ENCODE measurements at regions of chr3 and their contacts with region 1.

Region 1: GRCh38 chr3:184185461-184186308 is at the start of gene ABCF3:
- DNase-seq: peak; percentile 100
- ATAC-seq: peak; percentile 95
- H3K4me3 Mint-ChIP-seq: peak within 1 kb of the TSS; percentile 99
- H3K27ac Mint-ChIP-seq: peak within 1 kb of the TSS; percentile 93
- H3K4me1 Mint-ChIP-seq: peaks cover 32% of the 10 kb centered on the region
- H3K27me3 Mint-ChIP-seq: no peaks in the 10 kb centered on the region
- total RNA-seq, gene ABCF3: 58.2 to 66.2 TPM

Region 2: GRCh38 chr3:183635431-183636220 is 550.1 kb before region 1 on chr3 and contains the start of gene KLHL24:
- CTCF ChIA-PET with region 1: no interaction called
- POLR2A ChIA-PET with region 1: no interaction called
- intact Hi-C with region 1: loop called in 1 of 2 experiments (anchors 1 kb)
- DNase-seq: peak; percentile 95
- ATAC-seq: peak; percentile 85
- H3K4me3 Mint-ChIP-seq: peak within 1 kb of the TSS; percentile 87
- H3K27ac Mint-ChIP-seq: peak within 1 kb of the TSS; percentile 92
- H3K4me1 Mint-ChIP-seq: peaks cover 36% of the 10 kb centered on the region
- H3K27me3 Mint-ChIP-seq: no peaks in the 10 kb centered on the region
- total RNA-seq, gene KLHL24: 9.6 to 15.8 TPM

Region 3: DNA sequence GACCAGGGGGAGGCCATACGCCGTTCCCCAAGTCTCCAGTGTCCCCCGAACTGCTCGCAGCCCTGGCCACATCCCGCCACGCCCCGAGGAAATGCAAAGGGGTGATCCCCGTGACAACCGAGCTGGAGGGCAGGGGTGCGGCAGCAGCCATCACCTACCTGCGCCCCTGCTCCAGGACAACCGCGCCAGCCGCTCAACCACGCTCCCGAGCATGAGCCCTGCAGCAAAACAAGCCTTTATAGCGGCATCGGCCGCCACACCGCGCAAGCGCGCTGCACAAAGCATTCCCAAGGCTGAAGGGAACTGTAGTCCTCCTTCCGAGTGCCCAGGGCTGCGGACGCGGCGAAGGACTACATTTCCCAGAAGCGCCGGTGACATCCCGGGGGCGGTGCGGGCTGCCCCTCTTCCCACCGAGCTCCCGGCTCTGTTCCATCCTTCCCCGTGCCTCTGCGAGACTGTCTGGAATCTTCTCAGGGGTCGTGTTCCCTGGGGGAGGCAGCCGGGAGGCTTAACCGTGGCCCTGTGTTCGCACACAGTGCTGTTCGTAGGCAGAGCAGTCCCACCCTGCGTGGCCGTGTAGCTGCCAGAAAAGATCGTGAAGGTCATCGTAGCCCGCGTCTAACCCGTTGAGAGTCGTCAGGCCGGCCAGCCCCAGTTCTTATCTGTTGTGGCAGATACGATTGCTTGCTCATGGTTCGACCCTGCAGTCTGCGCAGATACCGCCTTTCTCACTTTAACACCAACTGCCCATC is 167.8 kb before region 1 on chr3 and contains the start of gene ABCC5:
- CTCF ChIA-PET with region 1: no interaction called
- POLR2A ChIA-PET with region 1: no interaction called
- intact Hi-C with region 1: loop called in 1 of 2 experiments (anchors 1 kb)
- DNase-seq: peak; percentile 91
- ATAC-seq: peak; percentile 96
- H3K4me3 Mint-ChIP-seq: peak within 1 kb of the TSS; percentile 98
- H3K27ac Mint-ChIP-seq: peak within 1 kb of the TSS; percentile 85
- H3K4me1 Mint-ChIP-seq: peaks cover 17% of the 10 kb centered on the region
- H3K27me3 Mint-ChIP-seq: peaks cover 9% of the 10 kb centered on the region
- total RNA-seq, gene ABCC5: 12.5 to 15.8 TPM

Region 4: DNA sequence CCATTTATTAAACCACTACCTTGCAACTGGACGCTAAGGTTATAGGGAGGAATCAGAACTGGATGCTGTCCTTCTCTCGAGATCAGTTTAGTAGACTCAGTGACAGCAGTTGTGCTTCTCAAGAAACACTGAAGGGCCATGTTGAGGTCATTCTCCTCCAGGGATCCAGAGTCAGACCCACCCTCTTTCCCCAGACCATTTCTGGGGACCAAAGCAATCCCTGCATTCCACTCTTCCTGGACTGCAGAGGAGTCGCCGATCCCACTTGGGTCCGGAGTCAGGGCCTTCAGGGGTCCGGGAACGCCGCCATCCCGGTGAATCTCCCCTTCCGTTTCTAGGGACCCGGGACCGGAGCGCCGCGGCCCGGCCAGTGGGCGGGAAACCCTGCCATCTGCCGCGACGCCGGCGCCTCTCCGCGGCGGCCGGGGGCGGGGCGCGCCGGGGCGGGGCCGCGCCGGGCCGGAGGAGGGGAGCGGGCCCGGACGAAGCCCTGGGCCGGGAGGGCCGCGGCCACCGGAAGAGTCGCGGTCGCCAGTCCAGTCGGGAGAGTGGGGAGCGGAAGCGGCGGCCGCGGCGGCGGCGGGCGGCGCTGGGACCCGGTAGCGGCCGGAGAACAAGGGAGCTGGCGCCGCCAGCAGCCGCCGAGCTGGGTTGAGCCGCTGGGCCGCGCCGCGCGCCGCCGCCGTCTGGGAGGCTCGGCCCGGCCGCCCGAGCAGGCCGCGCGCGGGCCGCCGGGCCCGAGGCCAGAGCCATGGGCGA is 30.6 kb before region 1 on chr3 and contains the start of gene DVL3:
- CTCF ChIA-PET with region 1: no interaction called
- POLR2A ChIA-PET with region 1: no interaction called
- intact Hi-C with region 1: loop called (anchors 1 kb)
- DNase-seq: peak; percentile 61
- ATAC-seq: peak; percentile 71
- H3K4me3 Mint-ChIP-seq: peak within 1 kb of the TSS; percentile 97
- H3K27ac Mint-ChIP-seq: peak within 1 kb of the TSS; percentile 80
- H3K4me1 Mint-ChIP-seq: peaks cover 23% of the 10 kb centered on the region
- H3K27me3 Mint-ChIP-seq: no peaks in the 10 kb centered on the region
- total RNA-seq, gene DVL3: 24.9 to 29.6 TPM

Region 5: GRCh38 chr3:184298759-184299496 is 113.2 kb after region 1 on chr3 and contains the start of gene PSMD2:
- CTCF ChIA-PET with region 1: interaction called, 6 read pairs
- POLR2A ChIA-PET with region 1: interaction called, 3 read pairs
- intact Hi-C with region 1: loop called (anchors 1 kb)
- DNase-seq: peak; percentile 99
- ATAC-seq: peak; percentile 96
- H3K4me3 Mint-ChIP-seq: peak within 1 kb of the TSS; percentile 84
- H3K27ac Mint-ChIP-seq: peak within 1 kb of the TSS; percentile 81
- H3K4me1 Mint-ChIP-seq: peaks cover 19% of the 10 kb centered on the region
- H3K27me3 Mint-ChIP-seq: no peaks in the 10 kb centered on the region
- total RNA-seq, gene PSMD2: 207 to 236 TPM

Region 6: DNA sequence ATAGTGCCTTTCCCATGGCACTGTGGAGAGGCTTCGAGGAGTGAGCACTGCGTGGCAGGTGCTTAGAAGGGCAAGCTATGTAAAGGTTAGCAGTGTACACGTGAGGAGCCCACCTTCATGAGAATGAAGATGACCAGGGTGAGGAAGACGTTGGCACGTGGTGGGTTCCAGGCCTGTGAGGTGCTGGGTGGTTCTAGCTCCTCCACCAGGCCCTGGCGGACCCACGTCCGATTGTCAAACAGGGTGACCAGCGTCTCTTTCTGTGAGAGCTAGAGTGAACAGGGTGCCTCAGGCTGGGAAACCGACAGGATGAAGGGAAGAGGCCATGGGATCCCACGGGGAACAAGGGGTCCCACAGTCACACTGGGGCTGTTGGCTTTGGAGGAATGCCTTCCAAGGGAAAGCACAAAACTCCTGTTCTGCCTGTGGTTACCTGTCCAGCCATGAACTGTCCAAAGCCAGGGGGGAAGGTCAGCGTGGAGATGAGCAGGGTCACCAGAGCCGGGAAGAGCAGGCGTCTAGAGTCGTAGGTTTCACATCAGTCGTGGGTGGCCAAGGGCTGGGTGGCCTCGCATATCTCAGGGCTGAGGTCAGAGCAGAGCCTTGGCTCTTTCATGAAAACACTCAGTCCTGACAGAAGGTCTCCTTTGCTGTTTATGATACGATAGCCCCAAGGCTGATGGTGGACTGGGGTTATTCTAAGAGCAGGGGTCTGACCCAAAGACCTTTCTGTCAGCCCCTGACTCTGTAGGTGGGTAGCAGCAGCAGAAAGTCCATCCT is 169.8 kb after region 1 on chr3:
- CTCF ChIA-PET with region 1: no interaction called
- POLR2A ChIA-PET with region 1: no interaction called
- intact Hi-C with region 1: no loop called
- DNase-seq: no peak
- ATAC-seq: no peak
- H3K4me3 Mint-ChIP-seq: no peak overlapping the region
- H3K27ac Mint-ChIP-seq: no peak overlapping the region
- H3K4me1 Mint-ChIP-seq: peaks cover 2% of the 10 kb centered on the region
- H3K27me3 Mint-ChIP-seq: no peaks in the 10 kb centered on the region

Region 7: DNA sequence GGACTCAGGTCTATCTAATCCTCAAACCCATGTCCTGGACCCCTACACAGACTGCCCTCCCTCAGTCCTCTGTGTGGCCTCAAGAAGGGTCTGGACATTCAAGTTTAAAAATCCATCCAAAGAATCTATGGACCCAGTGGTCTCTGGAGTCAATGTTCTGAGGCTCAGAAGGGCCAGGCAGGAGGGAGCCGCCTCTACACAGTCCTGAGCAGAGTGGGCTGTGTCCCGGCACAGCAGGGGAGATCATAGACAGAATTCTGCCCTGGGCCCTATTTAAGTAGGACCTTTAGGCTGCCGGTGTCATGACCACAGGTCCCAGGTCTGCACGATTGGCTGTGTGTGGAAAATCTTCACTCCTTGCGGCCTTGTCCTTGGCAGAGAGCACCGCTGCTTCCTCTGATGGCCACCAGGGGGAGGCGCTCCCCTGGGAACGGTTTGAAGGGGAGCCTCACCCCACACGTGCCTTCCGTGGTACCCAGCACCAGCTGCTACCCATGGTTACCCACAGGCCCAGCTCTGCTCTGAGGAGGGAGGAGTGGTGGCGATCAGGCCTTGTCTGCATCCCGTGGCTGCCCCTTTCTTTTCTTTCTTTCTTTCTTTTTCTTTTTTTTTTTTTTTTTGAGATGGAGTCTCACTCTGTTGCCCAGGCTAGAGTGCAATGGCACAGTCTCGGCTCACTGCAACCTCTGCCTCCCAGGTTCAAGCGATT is 232.1 kb after region 1 on chr3:
- CTCF ChIA-PET with region 1: no interaction called
- POLR2A ChIA-PET with region 1: no interaction called
- intact Hi-C with region 1: no loop called
- DNase-seq: peak; percentile 86
- ATAC-seq: peak; percentile 97
- H3K4me3 Mint-ChIP-seq: no peak overlapping the region
- H3K27ac Mint-ChIP-seq: no peak overlapping the region
- H3K4me1 Mint-ChIP-seq: peaks cover 2% of the 10 kb centered on the region
- H3K27me3 Mint-ChIP-seq: no peaks in the 10 kb centered on the region

Region 8: DNA sequence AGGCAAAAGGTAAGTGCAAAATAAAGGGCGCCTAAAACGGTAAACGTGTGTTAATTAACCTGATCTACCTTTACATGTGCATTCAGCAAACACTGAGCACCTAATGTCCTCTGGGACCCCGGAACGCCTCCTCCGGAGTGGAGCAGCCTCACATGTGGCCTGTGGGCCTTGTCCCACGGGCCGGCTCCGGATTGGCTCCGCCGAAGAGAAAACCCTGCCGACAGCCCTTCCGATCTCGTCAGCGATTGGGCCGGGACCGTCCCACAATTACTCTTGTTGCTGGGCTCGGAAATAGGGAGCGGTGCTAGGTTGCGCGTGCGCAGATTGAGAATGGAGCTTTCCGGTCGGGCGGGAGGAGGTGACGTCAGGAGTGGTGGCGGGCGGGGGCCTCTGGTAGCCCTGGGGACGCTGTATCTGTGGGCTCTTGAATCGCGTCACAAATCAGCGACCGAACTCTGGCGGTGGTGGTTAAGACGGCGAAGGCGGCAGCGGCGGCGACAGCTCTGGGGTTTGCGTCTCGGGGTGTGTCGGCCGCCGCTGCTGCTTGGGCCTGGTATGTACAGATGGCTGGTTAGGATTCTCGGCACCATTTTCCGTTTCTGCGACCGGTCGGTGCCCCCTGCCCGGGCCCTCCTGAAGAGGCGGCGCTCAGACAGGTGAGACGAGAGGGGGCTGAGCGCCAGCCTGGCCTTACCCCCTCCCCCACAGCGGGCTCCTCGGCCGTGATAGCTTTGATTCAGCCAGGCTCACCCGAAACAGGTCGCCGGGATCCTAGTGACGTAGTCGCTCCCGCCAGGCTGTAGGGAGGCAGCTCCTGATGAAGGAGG is 1400.4 kb after region 1 on chr3 and contains the start of gene SENP2:
- CTCF ChIA-PET with region 1: no interaction called
- POLR2A ChIA-PET with region 1: no interaction called
- intact Hi-C with region 1: loop called in 1 of 2 experiments (anchors 5 kb)
- DNase-seq: peak; percentile 100
- ATAC-seq: peak; percentile 98
- H3K4me3 Mint-ChIP-seq: peak within 1 kb of the TSS; percentile 87
- H3K27ac Mint-ChIP-seq: peak within 1 kb of the TSS; percentile 93
- H3K4me1 Mint-ChIP-seq: peaks cover 26% of the 10 kb centered on the region
- H3K27me3 Mint-ChIP-seq: no peaks in the 10 kb centered on the region
- total RNA-seq, gene SENP2: 23.2 to 24.6 TPM

Measured in activated CD4-positive, alpha-beta T cell treated with anti-CD3 and anti-CD28 coated beads for 36 hours (primary cell).